Naive thymus-derived CD4-positive, alpha-beta T cell (primary cell): ENCODE measurements at regions of chr6 and their contacts with region 1.

Region 1: GRCh38 chr6:135909737-135910387 is 58.4 kb downstream of the PDE7B start:
- DNase-seq: peak; percentile 11 to 83 (median 73)
- ATAC-seq: peak; percentile 84
- H3K4me3 ChIP-seq: no peak overlapping the region
- H3K4me3 Mint-ChIP-seq: peak overlapping the region in 7 of 10 donors; percentile 46 to 77 (median 61)
- H3K27ac ChIP-seq: no peak overlapping the region
- H3K27ac Mint-ChIP-seq: peak overlapping the region in 3 of 9 donors; percentile 41 to 66 (median 43)
- H3K4me1 ChIP-seq: no peaks in the 10 kb centered on the region
- H3K4me1 Mint-ChIP-seq: peaks cover 0 to 19% (median 10%) of the 10 kb centered on the region in 7 donors
- H3K27me3 ChIP-seq: no peaks in the 10 kb centered on the region
- H3K27me3 Mint-ChIP-seq: no peaks in the 10 kb centered on the region

Region 2: GRCh38 chr6:135451693-135452092 is 458.2 kb before region 1 on chr6:
- CTCF ChIA-PET with region 1: no interaction called
- POLR2A ChIA-PET with region 1: no interaction called
- intact Hi-C with region 1: loop called (anchors 1 kb)
- DNase-seq: peak in 6 of 9 donors; percentile 13 to 54 (median 44)
- ATAC-seq: peak; percentile 63
- H3K4me3 ChIP-seq: no peak overlapping the region
- H3K4me3 Mint-ChIP-seq: no peak overlapping the region
- H3K27ac ChIP-seq: no peak overlapping the region
- H3K27ac Mint-ChIP-seq: no peak overlapping the region
- H3K4me1 ChIP-seq: no peaks in the 10 kb centered on the region
- H3K4me1 Mint-ChIP-seq: peaks cover 0 to 4% (median 0%) of the 10 kb centered on the region in 7 donors
- H3K27me3 ChIP-seq: no peaks in the 10 kb centered on the region
- H3K27me3 Mint-ChIP-seq: no peaks in the 10 kb centered on the region

Region 3: DNA sequence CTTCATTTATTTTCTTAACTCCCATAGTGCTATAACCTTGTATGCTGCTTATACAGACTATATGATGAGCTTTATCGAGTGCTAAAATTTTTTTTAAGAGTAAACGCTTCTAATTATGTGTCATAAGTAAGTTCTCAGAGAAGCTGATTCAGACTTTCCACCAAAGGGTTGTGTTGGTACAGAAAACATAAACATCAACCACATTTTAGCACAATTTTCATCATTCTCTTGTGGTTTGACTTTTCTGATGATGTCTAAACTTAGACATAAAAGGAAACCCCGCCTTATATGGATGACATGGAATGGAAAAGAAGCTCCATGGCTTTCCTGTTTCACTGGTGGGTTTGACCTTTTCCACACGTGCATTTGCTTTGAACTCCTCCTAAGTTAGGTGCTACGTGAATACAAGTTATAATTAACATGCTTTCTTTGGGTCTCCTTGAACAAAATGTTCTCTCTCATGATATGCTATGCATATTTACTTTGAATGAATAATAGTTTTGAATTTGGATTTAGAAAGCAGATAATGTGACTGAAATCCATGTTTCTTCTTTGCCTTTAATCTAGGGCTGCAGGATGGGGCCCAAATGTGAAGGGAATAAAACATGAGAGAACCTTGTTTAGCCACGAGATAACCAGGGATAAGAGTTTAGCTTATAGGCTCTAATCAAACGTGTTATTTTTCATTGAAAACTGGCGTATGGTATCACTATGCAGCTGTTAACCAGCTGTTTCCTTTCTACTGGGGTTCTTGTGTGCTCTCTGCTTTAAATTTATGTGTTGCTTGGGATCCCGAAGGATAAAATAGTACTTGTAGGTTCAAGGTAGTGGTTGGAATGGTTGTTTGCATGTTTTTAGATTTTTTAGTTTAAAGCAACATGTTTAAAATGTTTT is 285.2 kb before region 1 on chr6:
- CTCF ChIA-PET with region 1: no interaction called
- POLR2A ChIA-PET with region 1: no interaction called
- intact Hi-C with region 1: loop called in 1 of 2 experiments (anchors 1 kb)
- DNase-seq: peak in 3 of 9 donors; percentile 1 to 9 (median 7)
- ATAC-seq: no peak
- H3K4me3 ChIP-seq: no peak overlapping the region
- H3K4me3 Mint-ChIP-seq: peak overlapping the region in 2 of 10 donors; percentile 2 to 17
- H3K27ac ChIP-seq: no peak overlapping the region
- H3K27ac Mint-ChIP-seq: peak overlapping the region in 3 of 9 donors; percentile 13 to 91 (median 47)
- H3K4me1 ChIP-seq: no peaks in the 10 kb centered on the region
- H3K4me1 Mint-ChIP-seq: peaks cover 5 to 51% (median 16%) of the 10 kb centered on the region in 7 donors
- H3K27me3 ChIP-seq: no peaks in the 10 kb centered on the region
- H3K27me3 Mint-ChIP-seq: no peaks in the 10 kb centered on the region

Region 4: GRCh38 chr6:135722679-135723078 is 187.2 kb before region 1 on chr6:
- CTCF ChIA-PET with region 1: no interaction called
- POLR2A ChIA-PET with region 1: no interaction called
- intact Hi-C with region 1: no loop called
- DNase-seq: no peak
- ATAC-seq: no peak
- H3K4me3 ChIP-seq: no peak overlapping the region
- H3K4me3 Mint-ChIP-seq: no peak overlapping the region
- H3K27ac ChIP-seq: no peak overlapping the region
- H3K27ac Mint-ChIP-seq: no peak overlapping the region
- H3K4me1 ChIP-seq: no peaks in the 10 kb centered on the region
- H3K4me1 Mint-ChIP-seq: peaks cover 0 to 5% (median 0%) of the 10 kb centered on the region in 7 donors
- H3K27me3 ChIP-seq: no peaks in the 10 kb centered on the region
- H3K27me3 Mint-ChIP-seq: no peaks in the 10 kb centered on the region

Region 5: DNA sequence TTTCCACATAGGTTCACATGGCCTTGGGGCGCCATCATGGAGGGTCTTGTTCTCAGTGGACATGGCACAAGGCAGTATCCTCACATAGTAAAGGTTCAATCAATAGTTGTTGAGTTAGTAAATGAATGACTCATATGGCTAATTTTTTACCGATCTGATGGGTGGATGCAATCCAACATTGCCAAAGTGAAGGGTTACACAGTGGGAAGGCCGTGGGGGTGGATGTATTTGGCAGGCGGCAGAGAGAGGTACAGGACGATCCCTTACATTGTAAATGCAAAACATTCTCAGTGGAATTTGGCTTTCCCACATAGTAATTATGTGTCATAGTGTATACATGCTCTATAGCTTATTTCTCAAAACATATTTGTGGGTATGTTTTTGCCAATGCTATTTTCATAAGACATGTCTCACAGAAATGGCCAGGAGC is 79.4 kb before region 1 on chr6:
- CTCF ChIA-PET with region 1: interaction called, 9 read pairs
- POLR2A ChIA-PET with region 1: interaction called, 3 read pairs
- intact Hi-C with region 1: loop called in 1 of 2 experiments (anchors 2 kb)
- DNase-seq: no peak
- ATAC-seq: no peak
- H3K4me3 ChIP-seq: no peak overlapping the region
- H3K4me3 Mint-ChIP-seq: no peak overlapping the region
- H3K27ac ChIP-seq: no peak overlapping the region
- H3K27ac Mint-ChIP-seq: no peak overlapping the region
- H3K4me1 ChIP-seq: no peaks in the 10 kb centered on the region
- H3K4me1 Mint-ChIP-seq: peaks cover 0 to 5% (median 0%) of the 10 kb centered on the region in 7 donors
- H3K27me3 ChIP-seq: no peaks in the 10 kb centered on the region
- H3K27me3 Mint-ChIP-seq: peaks cover 0 to 8% (median 3%) of the 10 kb centered on the region in 5 donors

Region 6: DNA sequence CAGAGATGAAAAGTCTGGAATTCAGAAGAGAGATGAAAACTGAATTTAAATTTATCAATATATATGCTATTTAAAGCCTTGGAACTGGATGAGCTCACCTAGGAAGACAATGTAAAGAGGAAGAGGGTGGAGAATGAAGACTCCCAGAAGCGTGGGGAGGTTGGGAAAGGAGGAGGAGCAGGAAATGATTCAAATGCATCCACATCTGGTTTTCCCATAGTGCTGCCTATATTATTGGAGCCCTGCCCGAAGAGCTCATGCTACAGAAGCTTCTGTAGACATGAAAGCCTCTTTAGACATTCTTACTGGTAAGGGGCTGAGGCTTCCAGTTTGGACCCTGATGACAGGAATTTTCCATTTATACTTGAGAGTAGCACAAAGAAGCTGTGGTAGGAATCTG is 39.1 kb before region 1 on chr6:
- CTCF ChIA-PET with region 1: interaction called, 5 read pairs
- POLR2A ChIA-PET with region 1: interaction called, 6 read pairs
- intact Hi-C with region 1: loop called (anchors 5 kb)
- DNase-seq: no peak
- ATAC-seq: no peak
- H3K4me3 ChIP-seq: no peak overlapping the region
- H3K4me3 Mint-ChIP-seq: no peak overlapping the region
- H3K27ac ChIP-seq: no peak overlapping the region
- H3K27ac Mint-ChIP-seq: peak overlapping the region in 7 of 9 donors; percentile 5 to 57 (median 35)
- H3K4me1 ChIP-seq: no peaks in the 10 kb centered on the region
- H3K4me1 Mint-ChIP-seq: peaks cover 3 to 32% (median 19%) of the 10 kb centered on the region in 7 donors
- H3K27me3 ChIP-seq: no peaks in the 10 kb centered on the region
- H3K27me3 Mint-ChIP-seq: no peaks in the 10 kb centered on the region

Region 7: DNA sequence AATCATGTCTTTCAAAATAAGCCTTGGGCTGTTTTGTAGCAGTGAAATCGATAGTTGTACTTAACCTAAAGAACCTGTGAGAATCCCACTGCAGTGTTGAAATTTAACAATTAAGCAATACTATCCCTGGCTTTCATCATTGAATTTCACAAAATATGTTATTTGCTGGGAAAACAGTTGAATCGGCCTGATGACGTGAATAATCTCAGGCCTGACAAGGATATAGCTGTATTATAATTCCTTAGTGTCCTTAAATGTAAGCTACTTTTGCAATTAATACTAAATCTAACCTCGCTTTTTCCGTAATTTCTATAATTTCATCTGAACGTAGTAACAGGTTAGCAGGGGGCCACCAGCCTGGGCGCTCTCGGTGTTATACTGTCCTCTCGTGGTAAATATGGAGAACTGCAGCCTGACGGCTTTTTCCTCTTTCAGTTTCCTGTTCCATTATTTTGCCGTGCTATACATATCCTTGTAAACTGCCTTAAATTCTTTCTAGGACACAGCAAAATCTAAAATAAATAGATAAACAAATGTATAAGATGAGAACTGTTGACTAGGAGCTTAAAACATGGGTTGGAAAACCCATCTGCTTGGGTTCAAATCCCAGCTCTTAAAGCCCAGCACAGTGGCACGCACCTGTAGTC is 316.3 kb after region 1 on chr6:
- CTCF ChIA-PET with region 1: interaction called, 12 read pairs
- POLR2A ChIA-PET with region 1: no interaction called
- intact Hi-C with region 1: loop called (anchors 1 kb)
- DNase-seq: peak; percentile 25 to 68 (median 57)
- ATAC-seq: peak; percentile 95
- H3K4me3 ChIP-seq: no peak overlapping the region
- H3K4me3 Mint-ChIP-seq: peak overlapping the region in 9 of 10 donors; percentile 4 to 73 (median 60)
- H3K27ac ChIP-seq: no peak overlapping the region
- H3K27ac Mint-ChIP-seq: peak overlapping the region in 1 of 9 donors; percentile 6
- H3K4me1 ChIP-seq: no peaks in the 10 kb centered on the region
- H3K4me1 Mint-ChIP-seq: peaks cover 0 to 23% (median 6%) of the 10 kb centered on the region in 7 donors
- H3K27me3 ChIP-seq: no peaks in the 10 kb centered on the region
- H3K27me3 Mint-ChIP-seq: no peaks in the 10 kb centered on the region